MCF 10A (cell line): ENCODE measurements at regions of chr7 and their contacts with region 1.

Region 1: GRCh38 chr7:94436018-94436604 is 41.4 kb downstream of the COL1A2 start:
- DNase-seq: peak; percentile 84
- H3K4me3 Mint-ChIP-seq: no peak overlapping the region
- H3K27ac Mint-ChIP-seq: peak overlapping the region; percentile 20
- H3K4me1 Mint-ChIP-seq: peaks cover 6% of the 10 kb centered on the region
- H3K27me3 Mint-ChIP-seq: no peaks in the 10 kb centered on the region
- CTCF ChIP-seq: peak; percentile 86

Region 2: GRCh38 chr7:93715234-93715633 is 720.9 kb before region 1 on chr7:
- CTCF ChIA-PET with region 1: interaction called, 4 read pairs
- POLR2A ChIA-PET with region 1: no interaction called
- intact Hi-C with region 1: loop called (anchors 2 kb)
- DNase-seq: peak; percentile 54
- H3K4me3 Mint-ChIP-seq: no peak overlapping the region
- H3K27ac Mint-ChIP-seq: no peak overlapping the region
- H3K4me1 Mint-ChIP-seq: peaks cover 18% of the 10 kb centered on the region
- H3K27me3 Mint-ChIP-seq: peaks cover 74% of the 10 kb centered on the region
- CTCF ChIP-seq: peak; percentile 48

Region 3: DNA sequence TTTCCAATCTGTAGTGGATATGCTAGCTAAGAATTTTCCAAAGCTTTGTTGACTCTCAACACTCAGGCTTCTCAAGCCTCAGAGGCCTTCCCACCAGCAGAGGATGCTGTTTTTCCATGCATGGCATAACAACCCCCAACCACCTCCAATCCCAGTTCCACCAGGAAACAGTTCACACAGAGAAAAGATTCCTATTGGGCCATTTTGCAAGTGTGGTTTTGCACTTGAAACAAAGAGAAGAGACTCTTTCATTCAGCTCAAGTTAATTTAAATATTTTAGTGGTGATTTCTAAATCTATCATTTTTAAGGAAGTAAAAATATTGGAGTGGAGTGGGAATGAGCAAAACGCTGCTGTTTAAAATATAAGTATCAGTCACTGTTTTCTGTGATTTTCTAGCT is 147.0 kb before region 1 on chr7:
- CTCF ChIA-PET with region 1: interaction called, 113 read pairs
- POLR2A ChIA-PET with region 1: interaction called, 9 read pairs
- intact Hi-C with region 1: loop called (anchors 1 kb)
- DNase-seq: peak; percentile 81
- H3K4me3 Mint-ChIP-seq: no peak overlapping the region
- H3K27ac Mint-ChIP-seq: no peak overlapping the region
- H3K4me1 Mint-ChIP-seq: no peaks in the 10 kb centered on the region
- H3K27me3 Mint-ChIP-seq: no peaks in the 10 kb centered on the region
- CTCF ChIP-seq: peak; percentile 74

Region 4: DNA sequence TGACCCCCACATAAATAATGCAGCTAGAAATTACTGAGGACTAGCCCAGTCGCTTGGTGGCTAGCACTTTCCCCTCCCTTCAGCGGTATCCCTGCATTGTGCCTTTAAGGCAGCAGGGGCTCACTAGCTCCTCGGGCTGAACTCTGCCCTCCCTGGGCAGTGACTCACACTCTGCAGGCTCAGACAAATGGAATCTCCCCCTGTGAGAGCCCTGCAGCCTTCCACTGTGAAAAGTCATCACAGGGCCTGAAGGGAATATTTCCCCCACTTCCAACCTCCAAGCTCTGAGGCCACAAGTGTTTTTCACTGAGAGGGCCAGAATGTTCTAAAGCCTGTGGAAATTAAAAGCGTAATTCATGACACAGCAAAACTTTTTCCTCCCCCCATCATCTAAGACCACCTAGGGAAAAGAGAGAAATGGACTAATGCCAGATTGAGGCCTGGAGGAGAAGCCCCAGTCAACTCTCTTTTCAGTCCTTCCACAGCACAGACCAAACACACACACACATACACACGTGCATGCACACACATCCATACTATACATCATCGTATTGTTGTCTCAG is 135.0 kb before region 1 on chr7:
- CTCF ChIA-PET with region 1: interaction called, 96 read pairs
- POLR2A ChIA-PET with region 1: no interaction called
- intact Hi-C with region 1: no loop called
- DNase-seq: peak; percentile 92
- H3K4me3 Mint-ChIP-seq: peak overlapping the region; percentile 27
- H3K27ac Mint-ChIP-seq: peak overlapping the region; percentile 86
- H3K4me1 Mint-ChIP-seq: peaks cover 39% of the 10 kb centered on the region
- H3K27me3 Mint-ChIP-seq: no peaks in the 10 kb centered on the region
- CTCF ChIP-seq: no peak

Region 5: GRCh38 chr7:94382132-94382531 is 54.0 kb before region 1 on chr7:
- CTCF ChIA-PET with region 1: no interaction called
- POLR2A ChIA-PET with region 1: no interaction called
- intact Hi-C with region 1: no loop called
- DNase-seq: no peak
- H3K4me3 Mint-ChIP-seq: no peak overlapping the region
- H3K27ac Mint-ChIP-seq: no peak overlapping the region
- H3K4me1 Mint-ChIP-seq: no peaks in the 10 kb centered on the region
- H3K27me3 Mint-ChIP-seq: no peaks in the 10 kb centered on the region
- CTCF ChIP-seq: no peak

Region 6: DNA sequence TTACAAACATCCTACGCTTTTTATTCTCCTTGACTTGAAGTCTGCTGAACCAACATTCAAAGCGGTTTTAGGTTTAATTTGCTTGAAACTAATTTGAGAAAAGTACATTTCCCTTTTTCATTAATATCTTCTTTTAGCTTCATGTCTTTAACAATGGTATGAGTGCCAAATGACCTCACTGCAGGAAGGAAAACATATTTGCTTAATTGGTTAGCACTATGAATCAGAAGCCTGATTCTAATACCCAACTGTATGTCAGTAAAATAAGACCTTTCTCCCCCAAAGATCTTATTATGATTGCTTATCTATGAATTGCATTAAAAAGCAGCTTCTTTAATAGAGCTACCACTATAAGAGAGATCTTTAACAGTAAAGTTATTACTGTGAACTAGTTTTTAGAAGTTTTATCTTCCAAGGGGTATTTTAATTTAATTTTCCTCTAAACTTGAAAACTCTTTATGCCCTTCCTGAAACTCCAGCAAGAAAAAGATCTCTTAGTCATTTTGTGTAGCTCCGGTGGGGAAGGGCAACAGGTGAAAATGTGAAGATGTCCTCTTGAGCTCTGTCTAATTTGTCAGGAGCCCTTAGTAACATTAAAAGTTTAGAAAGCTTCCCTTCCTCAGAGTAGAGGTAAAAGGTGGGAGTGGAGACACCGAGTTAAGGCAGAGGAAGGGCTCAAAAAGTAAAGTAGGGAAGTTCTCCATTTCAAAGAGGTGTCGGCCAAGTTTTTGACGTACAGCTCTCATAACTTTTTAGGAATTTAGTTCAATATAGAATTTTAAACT is 35.3 kb before region 1 on chr7:
- CTCF ChIA-PET with region 1: interaction called, 14 read pairs
- POLR2A ChIA-PET with region 1: no interaction called
- intact Hi-C with region 1: no loop called
- DNase-seq: no peak
- H3K4me3 Mint-ChIP-seq: no peak overlapping the region
- H3K27ac Mint-ChIP-seq: no peak overlapping the region
- H3K4me1 Mint-ChIP-seq: no peaks in the 10 kb centered on the region
- H3K27me3 Mint-ChIP-seq: no peaks in the 10 kb centered on the region
- CTCF ChIP-seq: no peak

Region 7: GRCh38 chr7:94449148-94449725 is 13.1 kb after region 1 on chr7:
- CTCF ChIA-PET with region 1: interaction called, 43 read pairs
- POLR2A ChIA-PET with region 1: no interaction called
- intact Hi-C with region 1: no loop called
- DNase-seq: peak; percentile 47
- H3K4me3 Mint-ChIP-seq: no peak overlapping the region
- H3K27ac Mint-ChIP-seq: no peak overlapping the region
- H3K4me1 Mint-ChIP-seq: no peaks in the 10 kb centered on the region
- H3K27me3 Mint-ChIP-seq: peaks cover 15% of the 10 kb centered on the region
- CTCF ChIP-seq: peak; percentile 52

Region 8: DNA sequence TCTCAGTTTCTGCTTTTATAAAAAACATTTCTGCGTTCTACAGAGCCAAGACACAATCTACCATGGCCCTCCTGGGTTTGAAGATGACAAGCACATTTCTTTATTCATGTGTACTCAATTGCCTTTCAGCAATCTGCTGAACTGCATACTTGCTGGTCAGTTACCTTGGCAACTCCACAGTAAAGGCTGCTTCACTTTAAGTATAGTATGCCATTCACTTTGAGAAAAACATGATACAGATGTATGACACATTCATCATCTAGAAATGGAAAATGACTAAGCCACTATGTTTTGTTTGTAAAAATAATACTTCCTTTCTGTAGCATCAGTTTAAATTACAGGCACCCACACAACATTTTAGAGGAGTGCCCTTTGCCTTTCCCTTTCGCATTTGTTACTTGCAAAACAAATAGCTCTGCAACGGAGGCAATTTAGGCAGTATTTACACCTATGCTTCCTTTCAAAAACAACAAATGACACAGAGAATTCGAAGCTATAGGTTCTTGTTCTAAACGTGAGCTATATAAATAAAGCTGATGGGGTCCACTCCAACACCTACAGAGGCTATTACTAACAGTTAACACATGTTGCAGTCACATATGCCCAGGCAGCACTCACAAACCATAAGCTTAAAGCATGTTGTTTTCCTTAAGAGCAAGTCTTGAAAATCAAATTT is 196.4 kb after region 1 on chr7:
- CTCF ChIA-PET with region 1: no interaction called
- POLR2A ChIA-PET with region 1: no interaction called
- intact Hi-C with region 1: no loop called
- DNase-seq: peak; percentile 59
- H3K4me3 Mint-ChIP-seq: no peak overlapping the region
- H3K27ac Mint-ChIP-seq: peak overlapping the region; percentile 16
- H3K4me1 Mint-ChIP-seq: peaks cover 16% of the 10 kb centered on the region
- H3K27me3 Mint-ChIP-seq: no peaks in the 10 kb centered on the region
- CTCF ChIP-seq: no peak

Region 9: GRCh38 chr7:94679358-94679757 is 243.2 kb after region 1 on chr7:
- CTCF ChIA-PET with region 1: no interaction called
- POLR2A ChIA-PET with region 1: no interaction called
- intact Hi-C with region 1: no loop called
- DNase-seq: no peak
- H3K4me3 Mint-ChIP-seq: no peak overlapping the region
- H3K27ac Mint-ChIP-seq: no peak overlapping the region
- H3K4me1 Mint-ChIP-seq: peaks cover 16% of the 10 kb centered on the region
- H3K27me3 Mint-ChIP-seq: no peaks in the 10 kb centered on the region
- CTCF ChIP-seq: no peak